ENCODE measurements at regions of chr5 and their contacts with region 1.

Region 1: GRCh38 chr5:32092938-32093812 is 80.9 kb downstream of the GOLPH3 start:
- DNase-seq: peak; percentile 62
- ATAC-seq: peak; percentile 77 to 87

Region 2: GRCh38 chr5:31581498-31582099 is 511.6 kb before region 1 on chr5:
- intact Hi-C with region 1: loop called in 1 of 2 experiments (anchors 5 kb)
- DNase-seq: no peak
- ATAC-seq: peak in 1 of 2 donors; percentile 27

Region 3: GRCh38 chr5:31825518-31826068 is 267.6 kb before region 1 on chr5:
- intact Hi-C with region 1: loop called (anchors 5 kb)
- DNase-seq: peak; percentile 47
- ATAC-seq: peak; percentile 85 to 88